Left lung (tissue), 14 donors: ENCODE measurements at regions of chr19 and their contacts with region 1.

Region 1: GRCh38 chr19:38707512-38708114 is 36.7 kb downstream of the CAPN12 start:
- DNase-seq: no peak
- ATAC-seq: peak; percentile 31
- H3K4me3 ChIP-seq: no peak overlapping the region
- H3K27ac ChIP-seq: peak overlapping the region; percentile 44 to 51
- H3K4me1 ChIP-seq: peaks cover 8 to 59% of the 10 kb centered on the region in 2 donors
- H3K27me3 ChIP-seq: no peaks in the 10 kb centered on the region
- CTCF ChIP-seq: no peak

Region 2: DNA sequence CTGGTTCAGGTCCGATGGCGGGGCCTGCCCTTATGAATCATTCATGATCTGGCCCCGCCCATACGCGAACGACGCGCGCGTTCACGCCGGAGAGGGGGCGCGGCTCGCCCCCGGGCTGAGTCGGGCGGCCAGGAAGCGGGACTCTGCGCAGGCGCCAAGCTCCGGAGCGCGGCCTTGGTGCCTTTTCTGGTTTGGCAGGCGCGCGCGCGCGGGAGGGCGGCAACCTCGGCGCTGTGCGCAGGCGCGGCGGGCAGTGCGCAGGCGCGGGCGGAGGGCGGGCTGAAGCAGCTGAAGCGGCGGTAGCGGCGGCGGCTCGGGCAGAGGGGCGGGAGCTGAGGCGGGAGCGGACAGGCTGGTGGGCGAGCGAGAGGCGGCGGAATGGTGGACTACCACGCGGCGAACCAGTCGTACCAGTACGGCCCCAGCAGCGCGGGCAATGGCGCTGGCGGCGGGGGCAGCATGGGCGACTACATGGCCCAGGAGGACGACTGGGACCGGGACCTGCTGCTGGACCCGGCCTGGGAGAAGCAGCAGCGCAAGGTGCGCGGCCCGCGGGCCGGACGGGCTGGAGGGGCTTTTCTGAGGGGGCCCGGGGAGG is 60.1 kb before region 1 on chr19 and contains the start of gene ACTN4:
- intact Hi-C with region 1: loop called (anchors 10 kb)
- DNase-seq: peak; percentile 97 to 100 (median 99)
- ATAC-seq: peak; percentile 82
- H3K4me3 ChIP-seq: peak within 1 kb of the TSS; percentile 57 to 88
- H3K27ac ChIP-seq: peak within 1 kb of the TSS; percentile 86 to 87
- H3K4me1 ChIP-seq: peaks cover 30 to 40% of the 10 kb centered on the region in 2 donors
- H3K27me3 ChIP-seq: no peaks in the 10 kb centered on the region
- CTCF ChIP-seq: no peak
- polyA plus RNA-seq, gene ACTN4: 373 to 467 (median 397) TPM